B cell (primary cell): ENCODE measurements at regions of chr19 and their contacts with region 1.

Region 1: DNA sequence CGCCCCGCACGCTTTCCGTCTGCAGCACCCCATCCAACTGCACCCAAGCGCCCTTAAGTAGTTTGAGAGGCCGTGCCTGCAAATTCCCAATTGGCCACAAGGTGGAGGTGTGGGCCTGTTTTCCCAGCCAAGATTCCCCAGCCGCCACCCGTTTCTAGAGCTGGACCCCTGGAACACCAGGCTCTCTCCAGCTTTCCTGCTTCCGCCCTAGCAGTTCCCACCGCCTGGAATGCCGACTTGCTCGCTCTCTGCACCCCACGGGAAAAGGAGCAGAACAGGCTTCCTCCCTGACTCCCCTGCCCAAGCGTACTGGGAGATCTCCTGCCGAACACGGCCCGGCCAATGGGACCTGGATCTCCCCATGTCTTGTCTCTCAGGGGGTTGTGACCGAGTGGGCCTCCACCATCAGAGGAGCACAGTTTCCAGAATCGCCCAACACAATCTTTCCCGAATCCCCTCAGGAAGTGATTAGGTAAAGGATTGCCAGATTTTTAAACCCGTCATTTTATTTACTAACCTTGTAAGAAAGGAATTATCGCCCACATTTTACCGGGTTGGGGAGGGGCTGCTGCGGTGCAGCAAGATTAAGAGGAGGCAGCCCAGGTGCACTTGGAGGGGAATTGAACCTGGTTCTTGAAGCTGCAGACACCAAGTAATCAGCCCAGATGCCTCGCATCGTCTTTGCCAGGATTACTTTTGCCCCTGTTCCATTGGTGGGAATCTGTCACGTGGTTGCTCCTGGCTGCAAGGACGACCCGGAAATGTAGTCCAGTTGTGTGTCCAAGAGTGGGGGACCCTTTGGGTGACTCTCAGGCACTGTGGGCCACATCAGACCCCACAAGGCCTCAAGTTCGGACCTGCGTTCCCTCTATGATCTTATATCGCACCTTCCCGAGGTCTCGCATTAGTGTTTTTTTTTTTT is 3.5 kb upstream of the NAPSA start:
- DNase-seq: peak; percentile 88
- ATAC-seq: peak; percentile 84
- H3K4me3 ChIP-seq: peak overlapping the region; percentile 67 to 80 (median 69)
- H3K4me3 Mint-ChIP-seq: peak overlapping the region; percentile 99
- H3K27ac ChIP-seq: peak overlapping the region; percentile 51 to 74
- H3K27ac Mint-ChIP-seq: peak overlapping the region; percentile 94
- H3K4me1 ChIP-seq: peaks cover 24 to 41% of the 10 kb centered on the region in 2 donors
- H3K4me1 Mint-ChIP-seq: peaks cover 30% of the 10 kb centered on the region
- H3K27me3 ChIP-seq: no peaks in the 10 kb centered on the region
- H3K27me3 Mint-ChIP-seq: no peaks in the 10 kb centered on the region
- CTCF ChIP-seq: peak; percentile 83

Region 2: GRCh38 chr19:50155520-50156109 is 213.3 kb before region 1 on chr19:
- CTCF ChIA-PET with region 1: no interaction called
- POLR2A ChIA-PET with region 1: no interaction called
- intact Hi-C with region 1: no loop called
- DNase-seq: no peak
- ATAC-seq: no peak
- H3K4me3 ChIP-seq: no peak overlapping the region
- H3K4me3 Mint-ChIP-seq: no peak overlapping the region
- H3K27ac ChIP-seq: no peak overlapping the region
- H3K27ac Mint-ChIP-seq: no peak overlapping the region
- H3K4me1 ChIP-seq: no peaks in the 10 kb centered on the region
- H3K4me1 Mint-ChIP-seq: no peaks in the 10 kb centered on the region
- H3K27me3 ChIP-seq: peaks cover 0 to 5% (median 0%) of the 10 kb centered on the region in 4 experiments
- H3K27me3 Mint-ChIP-seq: peaks cover 26% of the 10 kb centered on the region
- CTCF ChIP-seq: no peak

Region 3: DNA sequence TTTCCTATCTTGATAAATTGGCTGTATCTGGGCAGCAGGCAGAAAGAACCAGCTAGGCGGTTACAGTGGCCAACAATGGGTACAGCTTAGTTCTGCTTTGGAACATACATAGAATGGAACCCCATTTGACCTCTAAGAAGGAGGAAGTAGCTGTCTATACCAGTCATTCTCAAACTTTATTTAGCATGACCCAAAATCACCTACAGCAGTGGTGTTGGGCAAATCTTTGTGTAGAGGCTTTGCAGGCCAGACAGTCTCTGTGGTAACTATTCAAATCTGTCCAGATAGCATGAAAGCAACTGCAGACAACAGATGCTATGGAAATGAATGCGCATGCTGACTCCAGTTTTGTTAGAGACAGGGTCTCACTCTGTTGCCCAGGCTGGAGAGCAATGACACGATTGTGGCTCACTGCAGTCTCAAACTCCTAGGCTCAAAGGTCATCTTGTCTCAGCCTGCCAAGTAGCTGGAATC is 27.8 kb before region 1 on chr19:
- CTCF ChIA-PET with region 1: interaction called, 10 read pairs
- POLR2A ChIA-PET with region 1: no interaction called
- intact Hi-C with region 1: no loop called
- DNase-seq: peak; percentile 81
- ATAC-seq: peak; percentile 56
- H3K4me3 ChIP-seq: peak overlapping the region in 4 of 5 experiments; percentile 61 to 91 (median 76)
- H3K4me3 Mint-ChIP-seq: peak overlapping the region; percentile 86
- H3K27ac ChIP-seq: peak overlapping the region; percentile 37 to 72
- H3K27ac Mint-ChIP-seq: peak overlapping the region; percentile 91
- H3K4me1 ChIP-seq: peaks cover 65 to 84% of the 10 kb centered on the region in 2 donors
- H3K4me1 Mint-ChIP-seq: peaks cover 77% of the 10 kb centered on the region
- H3K27me3 ChIP-seq: no peaks in the 10 kb centered on the region
- H3K27me3 Mint-ChIP-seq: no peaks in the 10 kb centered on the region
- CTCF ChIP-seq: no peak

Region 4: DNA sequence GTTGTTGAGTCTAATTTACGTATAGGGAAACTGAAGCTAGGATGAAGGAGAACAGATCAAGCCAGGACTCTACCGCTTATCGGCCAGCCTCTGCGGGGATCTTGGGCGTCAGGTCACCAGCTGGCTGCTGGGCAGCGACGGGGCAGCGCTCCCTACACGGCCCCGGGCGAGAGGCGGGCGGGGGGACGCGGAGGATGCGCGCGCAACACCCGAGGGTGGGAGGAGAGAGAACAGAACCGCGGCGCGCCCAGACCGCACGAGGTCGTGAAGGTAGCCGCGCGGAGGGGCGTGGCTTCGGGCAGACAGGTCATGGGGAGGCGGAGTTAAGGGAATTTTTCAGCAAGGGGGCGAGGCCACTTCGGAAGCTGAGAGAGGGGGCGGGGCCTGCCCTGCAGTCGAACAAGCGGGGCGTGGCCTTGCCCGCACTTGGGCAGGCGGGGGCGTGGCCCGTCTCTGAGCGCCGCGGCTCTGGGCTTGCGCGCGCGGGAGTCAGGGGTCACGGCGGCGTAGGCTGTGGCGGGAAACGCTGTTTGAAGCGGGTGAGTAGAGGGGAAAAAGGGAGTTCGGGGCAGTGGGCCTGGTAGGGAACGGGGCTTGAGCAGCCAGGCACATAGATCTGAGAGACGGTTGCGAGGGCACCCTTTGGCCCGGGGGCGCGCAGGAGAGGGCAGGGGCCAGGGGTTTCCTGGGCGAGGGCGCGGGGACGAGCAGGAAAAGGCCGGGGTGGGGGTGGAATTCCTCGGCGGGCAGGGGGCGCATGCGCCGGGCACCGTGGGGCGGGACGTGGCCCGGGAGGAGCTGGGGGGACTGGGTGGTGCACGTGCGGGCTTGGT is 15.2 kb after region 1 on chr19 and contains the start of gene POLD1:
- CTCF ChIA-PET with region 1: interaction called, 4 read pairs
- POLR2A ChIA-PET with region 1: no interaction called
- intact Hi-C with region 1: loop called (anchors 1 kb)
- DNase-seq: peak; percentile 100
- ATAC-seq: peak; percentile 96
- H3K4me3 ChIP-seq: peak within 1 kb of the TSS; percentile 59 to 92 (median 67)
- H3K4me3 Mint-ChIP-seq: peak within 1 kb of the TSS; percentile 94
- H3K27ac ChIP-seq: peak within 1 kb of the TSS; percentile 64 to 73
- H3K27ac Mint-ChIP-seq: peak within 1 kb of the TSS; percentile 92
- H3K4me1 ChIP-seq: peaks cover 12 to 18% of the 10 kb centered on the region in 2 donors
- H3K4me1 Mint-ChIP-seq: peaks cover 31% of the 10 kb centered on the region
- H3K27me3 ChIP-seq: no peaks in the 10 kb centered on the region
- H3K27me3 Mint-ChIP-seq: no peaks in the 10 kb centered on the region
- CTCF ChIP-seq: no peak
- total RNA-seq, gene POLD1: 43.6 and 52.4 TPM in 2 replicates

Region 5: DNA sequence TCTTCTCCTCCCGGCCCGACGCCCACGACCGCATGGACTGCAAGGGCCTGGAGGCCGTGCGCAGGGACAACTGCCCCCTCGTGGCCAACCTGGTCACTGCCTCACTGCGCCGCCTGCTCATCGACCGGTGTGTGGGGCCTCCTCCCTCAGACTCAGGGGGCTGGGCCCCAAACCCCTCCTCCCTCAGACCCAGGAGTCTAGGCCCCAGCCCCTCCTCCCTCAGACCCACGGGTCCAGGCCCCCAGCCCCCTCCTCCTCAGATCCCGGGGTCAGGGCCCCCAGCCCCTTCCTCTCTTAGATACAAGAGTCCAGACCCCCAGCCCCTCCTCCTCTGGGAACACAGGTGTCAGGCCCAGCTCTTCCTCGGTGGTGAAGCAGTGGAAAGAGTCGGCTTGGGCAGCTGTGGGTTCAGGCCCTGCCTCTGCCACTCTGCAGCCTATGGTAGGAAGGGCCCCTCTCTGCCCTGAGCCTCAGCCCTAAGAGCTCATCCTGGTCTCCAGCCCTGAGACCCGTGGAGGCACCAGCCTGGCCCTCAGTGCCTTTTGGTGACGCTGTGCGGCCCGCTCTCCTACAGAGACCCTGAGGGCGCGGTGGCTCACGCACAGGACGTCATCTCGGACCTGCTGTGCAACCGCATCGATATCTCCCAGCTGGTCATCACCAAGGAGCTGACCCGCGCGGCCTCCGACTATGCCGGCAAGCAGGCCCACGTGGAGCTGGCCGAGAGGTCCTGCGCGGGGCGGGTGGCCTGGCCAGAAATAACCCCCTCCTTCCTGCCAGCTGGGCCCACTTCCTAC is 46.2 kb after region 1 on chr19:
- CTCF ChIA-PET with region 1: interaction called, 9 read pairs
- POLR2A ChIA-PET with region 1: interaction called, 9 read pairs
- intact Hi-C with region 1: loop called (anchors 1 kb)
- DNase-seq: peak; percentile 91
- ATAC-seq: peak; percentile 21
- H3K4me3 ChIP-seq: peak overlapping the region in 4 of 5 experiments; percentile 44 to 60 (median 52)
- H3K4me3 Mint-ChIP-seq: peak overlapping the region; percentile 81
- H3K27ac ChIP-seq: peak overlapping the region; percentile 97 to 98
- H3K27ac Mint-ChIP-seq: peak overlapping the region; percentile 98
- H3K4me1 ChIP-seq: peaks cover 30 to 48% of the 10 kb centered on the region in 2 donors
- H3K4me1 Mint-ChIP-seq: peaks cover 37% of the 10 kb centered on the region
- H3K27me3 ChIP-seq: no peaks in the 10 kb centered on the region
- H3K27me3 Mint-ChIP-seq: no peaks in the 10 kb centered on the region
- CTCF ChIP-seq: peak; percentile 92

Region 6: GRCh38 chr19:50556282-50557008 is 187.5 kb after region 1 on chr19:
- CTCF ChIA-PET with region 1: interaction called, 5 read pairs
- POLR2A ChIA-PET with region 1: no interaction called
- intact Hi-C with region 1: loop called (anchors 1 kb)
- DNase-seq: peak; percentile 81
- ATAC-seq: peak; percentile 59
- H3K4me3 ChIP-seq: peak overlapping the region in 4 of 5 experiments; percentile 35 to 55 (median 54)
- H3K4me3 Mint-ChIP-seq: peak overlapping the region; percentile 88
- H3K27ac ChIP-seq: no peak overlapping the region
- H3K27ac Mint-ChIP-seq: no peak overlapping the region
- H3K4me1 ChIP-seq: peaks cover 13 to 14% of the 10 kb centered on the region in 2 donors
- H3K4me1 Mint-ChIP-seq: peaks cover 5% of the 10 kb centered on the region
- H3K27me3 ChIP-seq: peaks cover 0 to 63% (median 13%) of the 10 kb centered on the region in 4 experiments
- H3K27me3 Mint-ChIP-seq: peaks cover 55% of the 10 kb centered on the region
- CTCF ChIP-seq: peak; percentile 83

Region 7: GRCh38 chr19:50724522-50725217 is 355.8 kb after region 1 on chr19:
- CTCF ChIA-PET with region 1: no interaction called
- POLR2A ChIA-PET with region 1: no interaction called
- intact Hi-C with region 1: loop called (anchors 2 kb)
- DNase-seq: peak; percentile 92
- ATAC-seq: peak; percentile 87
- H3K4me3 ChIP-seq: peak overlapping the region in 4 of 5 experiments; percentile 43 to 53 (median 48)
- H3K4me3 Mint-ChIP-seq: peak overlapping the region; percentile 75
- H3K27ac ChIP-seq: no peak overlapping the region
- H3K27ac Mint-ChIP-seq: peak overlapping the region; percentile 46
- H3K4me1 ChIP-seq: peaks cover 23 to 28% of the 10 kb centered on the region in 2 donors
- H3K4me1 Mint-ChIP-seq: peaks cover 36% of the 10 kb centered on the region
- H3K27me3 ChIP-seq: peaks cover 0 to 83% (median 27%) of the 10 kb centered on the region in 4 experiments
- H3K27me3 Mint-ChIP-seq: peaks cover 60% of the 10 kb centered on the region
- CTCF ChIP-seq: peak; percentile 50

Region 8: GRCh38 chr19:50785329-50785728 is 416.4 kb after region 1 on chr19:
- CTCF ChIA-PET with region 1: interaction called, 10 read pairs
- POLR2A ChIA-PET with region 1: interaction called, 3 read pairs
- intact Hi-C with region 1: no loop called
- DNase-seq: no peak
- ATAC-seq: no peak
- H3K4me3 ChIP-seq: no peak overlapping the region
- H3K4me3 Mint-ChIP-seq: no peak overlapping the region
- H3K27ac ChIP-seq: no peak overlapping the region
- H3K27ac Mint-ChIP-seq: no peak overlapping the region
- H3K4me1 ChIP-seq: peaks cover 0 to 6% of the 10 kb centered on the region in 2 donors
- H3K4me1 Mint-ChIP-seq: peaks cover 3% of the 10 kb centered on the region
- H3K27me3 ChIP-seq: peaks cover 0 to 19% (median 3%) of the 10 kb centered on the region in 4 experiments
- H3K27me3 Mint-ChIP-seq: peaks cover 16% of the 10 kb centered on the region
- CTCF ChIP-seq: no peak